ENCODE measurements at regions of chr11 and their contacts with region 1.

Region 1: DNA sequence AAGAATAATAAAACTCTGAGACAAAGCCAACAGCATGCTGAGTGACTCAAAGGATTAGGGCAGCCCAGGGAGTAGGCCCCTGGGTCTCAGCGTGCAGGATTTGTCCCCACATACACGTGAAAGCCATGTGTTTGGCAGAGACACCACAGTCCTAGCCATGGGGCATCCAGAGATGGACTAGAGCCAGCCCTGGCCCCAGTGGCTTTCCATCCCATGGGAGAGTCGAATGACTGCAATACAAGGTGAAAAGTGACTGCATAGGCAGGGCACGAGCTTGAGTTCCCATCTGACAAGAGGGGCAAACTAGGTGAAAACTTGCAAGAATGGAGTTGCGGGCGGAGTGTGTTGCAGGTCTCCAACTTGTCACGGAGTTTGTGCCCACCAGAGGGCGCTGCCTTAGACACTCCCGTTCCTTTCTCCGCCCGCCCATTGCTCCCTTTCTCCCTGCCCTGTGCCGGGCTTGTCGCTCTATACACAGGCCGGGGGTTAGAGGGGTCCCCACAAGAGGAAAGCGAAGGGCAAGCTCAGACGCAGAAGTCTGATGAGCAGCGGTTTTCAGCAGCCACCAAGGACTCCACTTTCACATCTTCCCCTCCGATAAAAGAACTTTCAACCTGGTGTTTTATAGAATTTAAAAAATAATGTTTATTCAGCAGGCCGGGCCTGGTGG is 24.2 kb downstream of the TSKU start:
- DNase-seq: peak; percentile 46
- H3K4me3 ChIP-seq: peak overlapping the region in 1 of 3 experiments; percentile 7
- H3K27ac ChIP-seq: no peak overlapping the region
- H3K4me1 ChIP-seq: peaks cover 13% of the 10 kb centered on the region
- H3K27me3 ChIP-seq: no peaks in the 10 kb centered on the region
- CTCF ChIP-seq: peak; percentile 73 to 77

Region 2: DNA sequence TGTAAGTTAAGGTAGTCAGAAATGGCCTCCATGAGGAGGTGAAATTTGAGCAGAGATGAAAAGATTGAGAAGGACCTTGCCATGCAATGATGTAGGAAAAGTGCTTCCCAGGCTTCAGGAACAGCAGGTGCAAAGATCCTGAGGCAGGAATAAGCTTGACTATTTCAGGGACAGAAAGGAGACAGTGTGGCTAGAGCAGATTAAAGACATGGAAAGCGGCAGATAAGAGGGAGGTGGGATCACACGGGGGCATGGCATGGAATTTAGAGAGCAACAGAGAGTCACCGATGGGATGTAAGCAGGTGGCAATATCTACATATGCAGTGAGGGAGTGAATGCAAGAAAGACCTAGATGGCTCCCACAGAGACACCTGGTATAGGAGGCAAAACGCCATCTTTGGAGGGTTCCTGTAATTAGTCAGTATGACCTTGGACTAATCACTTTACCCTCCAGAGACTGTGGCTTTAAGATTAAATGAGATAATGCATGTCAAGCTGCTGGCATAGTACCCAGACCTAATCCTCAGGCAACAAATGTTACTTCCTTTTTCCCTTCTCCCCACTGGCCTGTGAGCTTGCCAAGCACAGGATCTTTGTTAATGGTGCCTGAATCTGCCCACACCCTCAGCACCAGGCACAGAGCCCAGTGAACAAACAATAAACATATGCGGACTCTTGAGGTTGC is 28.7 kb after region 1 on chr11:
- CTCF ChIA-PET with region 1: no interaction called
- dilution Hi-C with region 1: no loop called
- in situ Hi-C with region 1: no loop called
- intact Hi-C with region 1: loop called (anchors 1 kb)
- DNase-seq: no peak
- H3K4me3 ChIP-seq: no peak overlapping the region
- H3K27ac ChIP-seq: no peak overlapping the region
- H3K4me1 ChIP-seq: peaks cover 25% of the 10 kb centered on the region
- H3K27me3 ChIP-seq: no peaks in the 10 kb centered on the region
- CTCF ChIP-seq: no peak

Region 3: GRCh38 chr11:76860539-76861475 is 53.5 kb after region 1 on chr11 and contains the start of gene ACER3:
- CTCF ChIA-PET with region 1: no interaction called
- dilution Hi-C with region 1: no loop called
- in situ Hi-C with region 1: no loop called
- intact Hi-C with region 1: loop called (anchors 2 kb)
- DNase-seq: peak; percentile 87
- H3K4me3 ChIP-seq: peak within 1 kb of the TSS; percentile 54 to 84 (median 74)
- H3K27ac ChIP-seq: peak within 1 kb of the TSS; percentile 51
- H3K4me1 ChIP-seq: peaks cover 10% of the 10 kb centered on the region
- H3K27me3 ChIP-seq: no peaks in the 10 kb centered on the region
- CTCF ChIP-seq: peak in 1 of 2 donors; percentile 39
- total RNA-seq, gene ACER3: 21.8 to 46.0 TPM

Region 4: GRCh38 chr11:76919887-76920746 is 112.8 kb after region 1 on chr11:
- CTCF ChIA-PET with region 1: interaction called, 5 read pairs
- dilution Hi-C with region 1: no loop called
- in situ Hi-C with region 1: loop called in 1 of 2 experiments (anchors 10 kb)
- intact Hi-C with region 1: loop called (anchors 1 kb)
- DNase-seq: peak; percentile 64
- H3K4me3 ChIP-seq: peak overlapping the region in 1 of 3 experiments; percentile 2
- H3K27ac ChIP-seq: no peak overlapping the region
- H3K4me1 ChIP-seq: no peaks in the 10 kb centered on the region
- H3K27me3 ChIP-seq: no peaks in the 10 kb centered on the region
- CTCF ChIP-seq: peak; percentile 89 to 92